ENCODE measurements at regions of chr10 and their contacts with region 1.

Region 1: GRCh38 chr10:130110246-130111112 is at the start of gene C10orf143:
- DNase-seq: peak; percentile 96 to 100 (median 98)

Region 2: DNA sequence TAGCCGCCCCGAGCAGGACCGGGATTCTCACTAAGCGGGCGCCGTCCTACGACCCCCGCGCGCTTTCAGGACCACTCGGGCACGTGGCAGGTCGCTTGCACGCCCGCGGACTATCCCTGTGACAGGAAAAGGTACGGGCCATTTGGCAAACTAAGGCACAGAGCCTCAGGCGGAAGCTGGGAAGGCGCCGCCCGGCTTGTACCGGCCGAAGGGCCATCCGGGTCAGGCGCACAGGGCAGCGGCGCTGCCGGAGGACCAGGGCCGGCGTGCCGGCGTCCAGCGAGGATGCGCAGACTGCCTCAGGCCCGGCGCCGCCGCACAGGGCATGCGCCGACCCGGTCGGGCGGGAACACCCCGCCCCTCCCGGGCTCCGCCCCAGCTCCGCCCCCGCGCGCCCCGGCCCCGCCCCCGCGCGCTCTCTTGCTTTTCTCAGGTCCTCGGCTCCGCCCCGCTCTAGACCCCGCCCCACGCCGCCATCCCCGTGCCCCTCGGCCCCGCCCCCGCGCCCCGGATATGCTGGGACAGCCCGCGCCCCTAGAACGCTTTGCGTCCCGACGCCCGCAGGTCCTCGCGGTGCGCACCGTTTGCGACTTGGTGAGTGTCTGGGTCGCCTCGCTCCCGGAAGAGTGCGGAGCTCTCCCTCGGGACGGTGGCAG is 643.6 kb before region 1 on chr10 and contains the start of gene MGMT:
- intact Hi-C with region 1: loop called (anchors 10 kb)
- DNase-seq: peak; percentile 85 to 99 (median 92)

Region 3: GRCh38 chr10:130127364-130128061 is 17.0 kb after region 1 on chr10:
- intact Hi-C with region 1: loop called (anchors 1 kb)
- DNase-seq: peak in 8 of 10 donors; percentile 38 to 93 (median 60)

Region 4: GRCh38 chr10:130136226-130137089 is 26.0 kb after region 1 on chr10 and contains the start of gene GLRX3:
- intact Hi-C with region 1: loop called (anchors 1 kb)
- DNase-seq: peak; percentile 74 to 98 (median 88)

Region 5: DNA sequence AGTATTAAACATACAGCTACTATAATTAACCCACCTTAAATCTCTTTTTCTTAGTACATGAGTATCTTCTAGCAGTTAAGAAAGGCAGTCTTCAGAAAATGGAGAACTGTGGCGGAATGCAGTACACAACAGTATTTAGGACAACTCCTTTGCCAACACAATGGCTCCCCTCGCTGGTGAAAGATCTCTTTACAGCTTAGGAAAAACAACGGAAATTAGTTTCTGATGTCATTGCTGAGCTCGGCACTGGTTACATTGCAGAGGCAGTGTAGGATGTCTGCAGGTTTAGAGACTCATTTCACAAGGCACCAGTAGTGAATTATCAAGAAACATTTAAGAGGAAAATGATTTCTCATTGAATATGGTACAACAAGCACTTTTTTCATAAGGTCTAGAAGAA is 69.2 kb after region 1 on chr10:
- intact Hi-C with region 1: loop called (anchors 5 kb)
- DNase-seq: peak in 4 of 10 donors; percentile 36 to 57 (median 46)